ENCODE measurements at regions of chr15 and their contacts with region 1.

Region 1: GRCh38 chr15:93862791-93863190 is 368.6 kb upstream of the MCTP2 start:
- DNase-seq: peak in 1 of 2 donors; percentile 66
- ATAC-seq: peak; percentile 45
- H3K4me3 ChIP-seq: no peak overlapping the region
- H3K27ac ChIP-seq: no peak overlapping the region
- H3K4me1 ChIP-seq: no peaks in the 10 kb centered on the region
- H3K27me3 ChIP-seq: no peaks in the 10 kb centered on the region

Region 2: GRCh38 chr15:93913310-93913709 is 50.5 kb after region 1 on chr15:
- intact Hi-C with region 1: loop called in 1 of 2 experiments (anchors 5 kb)
- DNase-seq: no peak
- ATAC-seq: no peak
- H3K4me3 ChIP-seq: no peak overlapping the region
- H3K27ac ChIP-seq: no peak overlapping the region
- H3K4me1 ChIP-seq: no peaks in the 10 kb centered on the region
- H3K27me3 ChIP-seq: no peaks in the 10 kb centered on the region

Region 3: GRCh38 chr15:93929375-93930094 is 66.7 kb after region 1 on chr15:
- intact Hi-C with region 1: no loop called
- DNase-seq: peak in 1 of 2 donors; percentile 62
- ATAC-seq: peak; percentile 82
- H3K4me3 ChIP-seq: no peak overlapping the region
- H3K27ac ChIP-seq: no peak overlapping the region
- H3K4me1 ChIP-seq: no peaks in the 10 kb centered on the region
- H3K27me3 ChIP-seq: no peaks in the 10 kb centered on the region

Region 4: DNA sequence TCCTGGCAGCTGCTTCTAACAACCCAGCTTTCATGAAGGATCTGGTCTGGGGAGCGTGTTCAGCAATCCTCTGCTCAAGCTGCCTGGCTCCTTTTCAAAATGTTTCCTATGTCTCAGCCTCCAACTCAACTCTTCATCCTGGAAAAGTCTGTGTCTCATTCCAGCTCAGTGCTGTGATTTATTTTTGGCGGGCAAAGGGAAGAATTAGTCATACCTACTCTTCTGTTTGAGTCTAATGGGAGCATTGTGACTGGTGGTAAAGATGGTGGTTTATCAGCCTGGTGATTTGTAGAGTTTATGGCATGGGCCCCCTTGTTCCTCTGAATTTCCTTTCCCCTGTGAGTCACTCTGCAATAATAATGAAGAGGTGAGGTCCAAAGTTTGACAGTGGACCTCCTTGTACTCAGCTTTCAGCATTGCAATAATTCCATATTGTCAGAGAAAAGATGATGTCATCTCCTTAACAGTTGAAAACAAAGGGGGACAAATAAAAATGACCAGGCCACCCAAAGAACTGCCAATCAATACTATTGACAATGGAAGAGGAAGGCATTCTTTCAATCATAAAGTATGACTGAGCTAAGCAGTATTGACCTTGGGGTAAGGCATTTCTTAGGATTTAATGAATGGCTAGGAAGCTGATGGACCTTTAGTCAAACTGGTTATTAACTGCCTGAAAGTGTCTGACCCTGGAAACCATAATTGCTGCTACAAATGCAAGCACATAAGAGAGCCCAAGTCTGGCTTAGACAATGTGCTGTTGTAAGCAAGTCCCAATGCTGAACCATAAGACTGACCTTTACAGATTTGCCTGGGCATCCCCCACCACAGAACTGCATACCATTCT is 163.9 kb after region 1 on chr15:
- intact Hi-C with region 1: no loop called
- DNase-seq: no peak
- ATAC-seq: no peak
- H3K4me3 ChIP-seq: no peak overlapping the region
- H3K27ac ChIP-seq: no peak overlapping the region
- H3K4me1 ChIP-seq: no peaks in the 10 kb centered on the region
- H3K27me3 ChIP-seq: no peaks in the 10 kb centered on the region

Measured in aorta (tissue), 5 donors.